ENCODE measurements at regions of chr2 and their contacts with region 1.

Region 1: DNA sequence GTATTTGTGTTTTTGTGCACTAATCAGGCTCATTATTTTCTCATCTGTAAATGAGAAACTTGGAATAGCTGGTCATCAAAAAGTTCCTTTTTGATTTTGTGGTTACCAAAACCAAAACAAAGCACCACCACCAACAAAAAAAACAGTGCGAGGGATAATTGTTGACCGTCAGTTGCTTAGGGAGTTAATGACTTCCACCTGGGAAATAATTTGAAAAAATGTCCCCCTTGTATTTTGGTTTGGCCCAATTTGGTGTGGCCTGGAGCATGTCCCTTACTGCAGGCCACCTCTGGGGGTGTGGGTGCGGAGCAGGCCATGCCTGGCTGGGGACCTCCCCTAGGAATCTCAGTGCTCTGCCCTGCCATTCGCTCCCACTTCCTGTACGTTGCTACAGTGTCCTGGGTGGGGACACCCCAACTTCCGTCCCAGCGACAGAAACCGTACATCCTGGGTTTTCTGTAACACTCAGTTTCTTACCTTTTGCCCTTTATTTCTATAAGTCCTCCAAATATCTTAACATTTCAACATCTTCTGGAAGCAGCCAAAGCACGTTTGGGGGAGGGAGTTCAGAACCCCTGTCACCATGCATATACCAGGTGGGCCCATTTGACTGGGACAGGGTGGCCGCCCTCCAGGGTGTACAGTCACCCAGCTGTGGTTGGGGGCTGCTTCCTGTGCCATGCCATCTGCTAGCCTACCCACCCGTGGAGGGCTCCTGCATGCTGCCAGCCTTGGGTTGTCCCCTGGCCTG is 31.3 kb downstream of the NCK2 start:
- DNase-seq: peak in 1 of 2 donors; percentile 78
- ATAC-seq: peak; percentile 61 to 68 (median 66)
- H3K4me3 ChIP-seq: no peak overlapping the region
- H3K4me3 Mint-ChIP-seq: peak overlapping the region; percentile 84
- H3K27ac ChIP-seq: peak overlapping the region; percentile 86
- H3K27ac Mint-ChIP-seq: peak overlapping the region; percentile 87
- H3K4me1 ChIP-seq: peaks cover 70% of the 10 kb centered on the region
- H3K4me1 Mint-ChIP-seq: peaks cover 73 to 75% of the 10 kb centered on the region in 2 donors
- H3K27me3 ChIP-seq: no peaks in the 10 kb centered on the region
- H3K27me3 Mint-ChIP-seq: no peaks in the 10 kb centered on the region
- CTCF ChIP-seq: no peak

Region 2: GRCh38 chr2:105746177-105747080 is 29.6 kb before region 1 on chr2:
- intact Hi-C with region 1: loop called (anchors 2 kb)
- DNase-seq: peak; percentile 54 to 83
- ATAC-seq: peak; percentile 26 to 30 (median 27)
- H3K4me3 ChIP-seq: peak overlapping the region; percentile 64
- H3K4me3 Mint-ChIP-seq: peak overlapping the region; percentile 95
- H3K27ac ChIP-seq: peak overlapping the region; percentile 65
- H3K27ac Mint-ChIP-seq: peak overlapping the region; percentile 91 to 95
- H3K4me1 ChIP-seq: peaks cover 53% of the 10 kb centered on the region
- H3K4me1 Mint-ChIP-seq: peaks cover 67 to 68% of the 10 kb centered on the region in 2 donors
- H3K27me3 ChIP-seq: no peaks in the 10 kb centered on the region
- H3K27me3 Mint-ChIP-seq: no peaks in the 10 kb centered on the region
- CTCF ChIP-seq: no peak

Region 3: GRCh38 chr2:105896765-105897163 is 120.8 kb after region 1 on chr2:
- intact Hi-C with region 1: no loop called
- DNase-seq: no peak
- ATAC-seq: no peak
- H3K4me3 ChIP-seq: no peak overlapping the region
- H3K4me3 Mint-ChIP-seq: no peak overlapping the region
- H3K27ac ChIP-seq: no peak overlapping the region
- H3K27ac Mint-ChIP-seq: peak overlapping the region in 1 of 2 donors; percentile 13
- H3K4me1 ChIP-seq: peaks cover 5% of the 10 kb centered on the region
- H3K4me1 Mint-ChIP-seq: no peaks in the 10 kb centered on the region
- H3K27me3 ChIP-seq: no peaks in the 10 kb centered on the region
- H3K27me3 Mint-ChIP-seq: no peaks in the 10 kb centered on the region
- CTCF ChIP-seq: no peak

Measured in natural killer cell (primary cell).